Activated T-helper 1 cell treated with anti-CD3 and anti-CD28 coated beads, Interleukin-12 subunit alpha, Interleukin-12 subunit beta, Interleukin-2, Interleukin-4 antibody, amounts not matched to agents 30 ng/mL and 10 ng/mL and 1 ng/mL, durations not matched to agents 14 hours and 24 hours and 36 hours (primary cell): ENCODE measurements at regions of chr5 and their contacts with region 1.

Region 1: GRCh38 chr5:54517174-54518092 is at the start of gene SNX18:
- DNase-seq: peak; percentile 90
- H3K4me3 Mint-ChIP-seq: peak within 1 kb of the TSS; percentile 86
- H3K27ac Mint-ChIP-seq: peak within 1 kb of the TSS; percentile 76
- H3K4me1 Mint-ChIP-seq: peaks cover 42% of the 10 kb centered on the region
- H3K27me3 Mint-ChIP-seq: peaks cover 20% of the 10 kb centered on the region
- total RNA-seq, gene SNX18: 25.4 and 27.9 TPM in 2 replicates

Region 2: GRCh38 chr5:54719384-54720283 is 202.2 kb after region 1 on chr5:
- intact Hi-C with region 1: loop called (anchors 1 kb)
- DNase-seq: no peak
- H3K4me3 Mint-ChIP-seq: no peak overlapping the region
- H3K27ac Mint-ChIP-seq: peak overlapping the region; percentile 80
- H3K4me1 Mint-ChIP-seq: peaks cover 46% of the 10 kb centered on the region
- H3K27me3 Mint-ChIP-seq: no peaks in the 10 kb centered on the region

Region 3: GRCh38 chr5:54844905-54845566 is 327.6 kb after region 1 on chr5:
- intact Hi-C with region 1: loop called (anchors 1 kb)
- DNase-seq: no peak
- H3K4me3 Mint-ChIP-seq: no peak overlapping the region
- H3K27ac Mint-ChIP-seq: peak overlapping the region; percentile 59
- H3K4me1 Mint-ChIP-seq: peaks cover 32% of the 10 kb centered on the region
- H3K27me3 Mint-ChIP-seq: peaks cover 14% of the 10 kb centered on the region

Region 4: GRCh38 chr5:54905943-54906537 is 388.6 kb after region 1 on chr5:
- intact Hi-C with region 1: loop called (anchors 1 kb)
- DNase-seq: peak; percentile 50
- H3K4me3 Mint-ChIP-seq: no peak overlapping the region
- H3K27ac Mint-ChIP-seq: no peak overlapping the region
- H3K4me1 Mint-ChIP-seq: peaks cover 55% of the 10 kb centered on the region
- H3K27me3 Mint-ChIP-seq: peaks cover 37% of the 10 kb centered on the region

Region 5: GRCh38 chr5:55159763-55160492 is 642.5 kb after region 1 on chr5 and contains the start of gene GPX8:
- intact Hi-C with region 1: loop called (anchors 1 kb)
- DNase-seq: no peak
- H3K4me3 Mint-ChIP-seq: no peak within 1 kb of the TSS
- H3K27ac Mint-ChIP-seq: no peak within 1 kb of the TSS
- H3K4me1 Mint-ChIP-seq: peaks cover 8% of the 10 kb centered on the region
- H3K27me3 Mint-ChIP-seq: peaks cover 64% of the 10 kb centered on the region
- total RNA-seq, gene GPX8: not detected in 2 replicates